Left colon (tissue), 2 donors: ENCODE measurements at regions of chr1 and their contacts with region 1.

Region 1: DNA sequence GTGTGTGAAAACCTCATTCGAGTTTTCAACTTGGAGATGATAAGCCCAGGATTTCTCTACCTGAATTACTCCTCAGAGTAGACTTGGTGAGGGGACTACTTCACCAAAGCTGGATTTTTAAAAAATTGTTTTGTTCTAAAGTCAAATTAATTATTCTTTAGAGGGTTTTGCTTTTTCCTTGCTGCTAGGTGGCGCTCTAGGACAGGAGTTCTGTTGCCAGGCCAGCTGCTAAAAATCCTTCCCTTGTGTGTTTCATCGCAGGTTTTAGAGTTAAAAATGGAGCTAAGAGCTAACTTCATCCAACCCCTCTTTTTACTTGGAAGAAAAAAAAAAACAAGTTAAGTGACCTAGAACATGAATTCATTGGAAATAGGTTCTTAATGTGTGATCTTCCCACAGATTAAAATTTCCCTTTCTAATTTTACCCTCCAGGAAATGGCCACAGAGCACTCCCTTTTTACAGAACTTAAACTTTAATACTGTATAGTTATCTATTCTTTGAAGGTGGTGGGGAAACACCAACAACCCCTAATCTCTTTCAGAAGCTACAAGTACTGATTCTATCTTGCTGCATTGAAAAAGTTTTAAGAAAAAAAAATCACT is 36.7 kb upstream of the FAM163A start:
- DNase-seq: peak; percentile 37 to 39
- ATAC-seq: peak; percentile 40

Region 2: DNA sequence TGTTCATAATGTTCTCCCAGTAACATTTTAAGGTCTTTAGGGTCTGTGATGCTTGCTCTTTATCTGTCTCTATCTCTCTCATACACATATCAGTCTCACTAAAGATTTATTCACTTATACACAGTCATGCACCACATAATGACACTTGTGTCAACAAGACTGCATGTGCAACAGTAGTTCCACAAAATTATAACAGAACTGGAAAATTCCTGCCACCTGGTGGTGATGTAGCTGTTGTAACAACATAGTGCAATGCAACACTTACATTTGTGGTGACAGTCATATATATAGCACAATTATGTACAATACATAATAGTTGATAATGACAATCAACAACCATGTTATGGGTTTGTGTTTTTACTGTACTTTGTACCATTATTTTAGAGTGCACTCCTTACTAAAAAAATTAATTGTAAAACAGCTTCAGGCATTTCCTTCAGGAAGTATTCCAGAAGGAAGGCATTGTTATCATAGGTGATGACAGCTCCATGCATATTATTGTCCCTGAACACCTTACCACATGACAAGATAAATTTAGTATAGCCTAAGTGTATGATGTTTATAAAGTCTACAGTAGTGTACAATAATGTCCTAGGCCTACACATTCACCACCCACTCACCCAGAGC is 106.7 kb before region 1 on chr1:
- intact Hi-C with region 1: no loop called
- DNase-seq: peak in 1 of 2 donors; percentile 43
- ATAC-seq: peak; percentile 96

Region 3: GRCh38 chr1:179809506-179810366 is 103.3 kb after region 1 on chr1:
- intact Hi-C with region 1: loop called (anchors 2 to 10 kb)
- DNase-seq: peak in 1 of 2 donors; percentile 46
- ATAC-seq: peak; percentile 59